ENCODE measurements at regions of chr14 and their contacts with region 1.

Region 1: GRCh38 chr14:34043627-34044372 is 92.9 kb upstream of the EGLN3 start:
- DNase-seq: peak; percentile 95
- ATAC-seq: peak; percentile 89
- H3K4me3 Mint-ChIP-seq: peak overlapping the region; percentile 7
- H3K27ac Mint-ChIP-seq: peak overlapping the region; percentile 80
- H3K4me1 Mint-ChIP-seq: peaks cover 42% of the 10 kb centered on the region
- H3K27me3 Mint-ChIP-seq: peaks cover 9% of the 10 kb centered on the region
- CTCF ChIP-seq: no peak

Region 2: DNA sequence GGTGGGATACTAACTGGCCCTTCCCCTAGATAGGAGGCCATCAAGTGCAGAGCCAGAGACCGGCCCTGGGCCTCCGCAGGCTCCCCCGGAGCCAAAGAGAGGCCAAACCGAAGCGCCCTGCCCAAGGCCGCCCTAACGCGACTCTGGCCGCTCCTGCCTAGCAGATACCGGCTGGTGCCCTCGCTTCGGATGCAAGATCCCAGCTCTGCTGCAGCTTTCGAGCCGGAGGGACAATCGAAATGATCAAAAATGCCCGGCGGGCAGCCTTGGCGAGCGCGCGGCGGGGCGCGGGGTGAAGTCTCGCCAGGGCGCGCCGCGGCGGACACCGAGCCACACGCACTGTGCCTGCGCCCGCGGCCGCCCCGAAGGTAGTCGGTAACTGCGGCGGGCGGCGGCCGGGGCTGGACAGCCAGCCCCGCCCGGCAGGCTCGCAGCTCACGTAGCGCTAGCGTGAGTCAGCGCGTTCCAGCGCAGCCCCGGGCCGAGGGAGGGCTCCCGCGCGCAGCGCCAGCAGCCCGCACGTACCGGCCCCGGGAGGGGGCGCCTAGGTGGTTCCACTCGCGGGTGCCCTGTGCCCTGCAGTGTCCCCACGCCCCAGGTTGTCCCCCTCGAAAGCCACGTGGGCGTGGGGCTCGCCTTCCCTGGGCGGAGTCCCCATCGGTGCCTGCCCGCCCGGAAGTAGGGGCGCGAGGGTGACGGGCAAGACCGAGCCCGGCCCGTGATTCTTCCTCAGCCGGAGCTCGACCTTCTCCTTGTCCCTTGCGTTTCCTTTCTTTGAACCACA is 16.2 kb after region 1 on chr14:
- CTCF ChIA-PET with region 1: interaction called, 4 read pairs
- POLR2A ChIA-PET with region 1: interaction called, 12 read pairs
- intact Hi-C with region 1: no loop called
- DNase-seq: peak; percentile 69
- ATAC-seq: peak; percentile 91
- H3K4me3 Mint-ChIP-seq: peak overlapping the region; percentile 78
- H3K27ac Mint-ChIP-seq: peak overlapping the region; percentile 83
- H3K4me1 Mint-ChIP-seq: peaks cover 11% of the 10 kb centered on the region
- H3K27me3 Mint-ChIP-seq: peaks cover 21% of the 10 kb centered on the region
- CTCF ChIP-seq: no peak

Measured in activated CD8-positive, alpha-beta T cell treated with anti-CD3 and anti-CD28 coated beads for 36 hours (primary cell).